Naive thymus-derived CD4-positive, alpha-beta T cell (primary cell): ENCODE measurements at regions of chr10 and their contacts with region 1.

Region 1: DNA sequence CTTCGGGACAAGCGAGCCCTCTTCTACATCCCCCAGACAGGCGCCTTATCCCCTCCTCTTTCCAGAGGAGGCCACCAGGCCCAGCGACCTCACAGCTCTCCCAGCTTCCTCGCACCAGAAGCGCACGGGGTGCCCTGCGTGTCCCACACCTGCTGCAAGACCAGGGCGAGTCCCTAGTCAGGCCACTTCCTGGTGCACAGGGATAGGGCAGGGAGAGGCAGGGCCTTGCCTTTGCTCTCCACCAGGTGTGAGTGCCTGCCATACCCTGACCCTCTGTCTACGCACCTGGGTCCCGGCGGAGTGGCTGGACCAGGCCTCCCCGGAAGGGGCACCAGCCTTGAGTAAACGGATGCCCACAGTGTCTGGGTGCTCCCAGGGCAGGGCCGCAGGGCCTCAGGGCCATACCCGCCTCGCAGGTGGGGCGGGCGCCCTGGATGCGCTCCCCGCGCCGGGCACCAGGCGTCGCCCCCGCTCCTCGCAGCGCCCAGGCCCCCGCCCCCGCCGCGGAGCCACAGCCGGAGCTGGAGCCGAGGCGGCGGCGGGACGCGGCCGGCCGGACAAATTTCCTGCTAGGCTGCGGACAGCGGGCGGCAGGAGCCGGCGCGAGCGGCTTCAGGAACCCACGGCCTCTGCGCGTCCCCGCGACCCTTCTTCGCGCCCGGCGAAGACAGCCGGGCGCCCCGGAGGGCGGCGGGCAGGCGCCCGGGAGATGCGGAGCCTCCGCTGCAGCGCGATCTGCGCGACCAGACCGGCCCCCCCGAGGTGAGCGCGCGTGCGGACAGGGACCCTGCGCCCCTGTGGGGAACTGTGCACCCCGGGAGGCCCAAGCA is at the start of gene PTPRE:
- DNase-seq: peak; percentile 18 to 82 (median 65)
- ATAC-seq: peak; percentile 95
- H3K4me3 ChIP-seq: peak within 1 kb of the TSS; percentile 39
- H3K4me3 Mint-ChIP-seq: peak within 1 kb of the TSS; percentile 8 to 61 (median 38)
- H3K27ac ChIP-seq: no peak within 1 kb of the TSS
- H3K27ac Mint-ChIP-seq: no peak within 1 kb of the TSS
- H3K4me1 ChIP-seq: no peaks in the 10 kb centered on the region
- H3K4me1 Mint-ChIP-seq: peaks cover 0 to 8% (median 0%) of the 10 kb centered on the region in 7 donors
- H3K27me3 ChIP-seq: no peaks in the 10 kb centered on the region
- H3K27me3 Mint-ChIP-seq: peaks cover 20 to 44% (median 24%) of the 10 kb centered on the region in 5 donors
- total RNA-seq, gene PTPRE: 25.4 to 237 (median 29.1) TPM

Region 2: DNA sequence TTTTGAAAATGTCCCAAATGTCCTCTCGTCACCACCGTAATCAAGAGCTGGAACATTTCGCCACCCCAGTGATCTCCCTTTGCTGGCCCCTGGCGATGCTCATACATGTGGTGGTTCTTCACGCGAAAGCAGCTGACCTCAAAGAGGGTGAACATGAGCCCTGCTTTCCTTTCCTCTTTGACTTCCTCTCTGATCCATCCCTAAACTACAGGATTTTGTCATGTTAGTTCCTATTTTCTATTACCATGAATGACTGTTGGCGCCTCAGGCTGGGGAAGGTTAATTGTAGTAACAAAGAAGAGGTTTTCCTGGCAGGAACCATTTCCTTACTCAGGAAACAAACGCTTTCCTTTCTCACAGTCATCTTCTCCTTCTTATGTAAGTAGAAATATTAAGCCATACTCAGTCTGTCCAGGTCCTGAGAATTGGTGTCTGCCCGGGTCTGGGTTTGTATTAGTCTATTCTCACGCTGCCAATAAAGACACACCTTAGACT is 824.9 kb before region 1 on chr10:
- CTCF ChIA-PET with region 1: no interaction called
- POLR2A ChIA-PET with region 1: no interaction called
- intact Hi-C with region 1: no loop called
- DNase-seq: no peak
- ATAC-seq: no peak
- H3K4me3 ChIP-seq: no peak overlapping the region
- H3K4me3 Mint-ChIP-seq: no peak overlapping the region
- H3K27ac ChIP-seq: no peak overlapping the region
- H3K27ac Mint-ChIP-seq: no peak overlapping the region
- H3K4me1 ChIP-seq: no peaks in the 10 kb centered on the region
- H3K4me1 Mint-ChIP-seq: no peaks in the 10 kb centered on the region
- H3K27me3 ChIP-seq: no peaks in the 10 kb centered on the region
- H3K27me3 Mint-ChIP-seq: peaks cover 0 to 12% (median 0%) of the 10 kb centered on the region in 5 donors

Region 3: DNA sequence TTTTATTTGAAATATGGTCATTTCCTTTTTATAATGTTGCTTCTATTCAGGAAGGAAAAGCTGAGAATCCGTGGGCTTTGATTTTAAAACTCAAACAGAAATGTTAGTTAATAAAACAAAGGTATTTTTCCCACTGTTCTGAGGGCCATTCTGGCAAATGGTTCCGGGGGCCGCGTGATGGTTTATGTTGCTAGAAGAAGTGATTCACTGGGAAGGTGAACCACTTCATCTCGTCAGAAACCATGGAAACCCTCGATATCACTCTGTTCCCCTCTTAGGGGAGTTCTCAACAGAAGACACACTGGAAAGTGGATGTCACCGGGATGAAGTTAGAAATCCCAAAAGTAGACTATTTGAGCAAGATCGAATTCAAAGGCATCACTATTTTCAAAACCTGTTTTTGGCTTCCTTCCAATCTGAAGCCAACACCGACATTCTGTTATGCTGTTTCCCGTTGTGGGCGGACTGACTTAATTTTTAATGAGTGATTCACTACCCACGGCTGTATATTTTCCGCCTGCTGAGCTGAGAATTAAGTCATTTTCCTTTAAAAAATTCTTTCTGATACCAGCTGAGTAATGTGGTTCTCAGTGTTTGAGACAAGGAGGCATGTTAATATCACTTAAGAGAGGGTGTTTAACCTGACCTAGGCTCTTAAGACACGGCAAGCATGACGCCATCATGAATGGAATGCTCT is 84.2 kb after region 1 on chr10:
- CTCF ChIA-PET with region 1: no interaction called
- POLR2A ChIA-PET with region 1: no interaction called
- intact Hi-C with region 1: loop called in 1 of 2 experiments (anchors 5 kb)
- DNase-seq: peak in 6 of 9 donors; percentile 14 to 42 (median 24)
- ATAC-seq: peak; percentile 62
- H3K4me3 ChIP-seq: peak overlapping the region; percentile 31
- H3K4me3 Mint-ChIP-seq: peak overlapping the region in 9 of 10 donors; percentile 33 to 73 (median 62)
- H3K27ac ChIP-seq: peak overlapping the region; percentile 9
- H3K27ac Mint-ChIP-seq: peak overlapping the region in 5 of 9 donors; percentile 19 to 80 (median 71)
- H3K4me1 ChIP-seq: peaks cover 7 to 9% of the 10 kb centered on the region in 2 donors
- H3K4me1 Mint-ChIP-seq: peaks cover 6 to 36% (median 16%) of the 10 kb centered on the region in 7 donors
- H3K27me3 ChIP-seq: no peaks in the 10 kb centered on the region
- H3K27me3 Mint-ChIP-seq: peaks cover 0 to 5% (median 0%) of the 10 kb centered on the region in 5 donors